Calu3 (cell line): ENCODE measurements at regions of chr6 and their contacts with region 1.

Region 1: DNA sequence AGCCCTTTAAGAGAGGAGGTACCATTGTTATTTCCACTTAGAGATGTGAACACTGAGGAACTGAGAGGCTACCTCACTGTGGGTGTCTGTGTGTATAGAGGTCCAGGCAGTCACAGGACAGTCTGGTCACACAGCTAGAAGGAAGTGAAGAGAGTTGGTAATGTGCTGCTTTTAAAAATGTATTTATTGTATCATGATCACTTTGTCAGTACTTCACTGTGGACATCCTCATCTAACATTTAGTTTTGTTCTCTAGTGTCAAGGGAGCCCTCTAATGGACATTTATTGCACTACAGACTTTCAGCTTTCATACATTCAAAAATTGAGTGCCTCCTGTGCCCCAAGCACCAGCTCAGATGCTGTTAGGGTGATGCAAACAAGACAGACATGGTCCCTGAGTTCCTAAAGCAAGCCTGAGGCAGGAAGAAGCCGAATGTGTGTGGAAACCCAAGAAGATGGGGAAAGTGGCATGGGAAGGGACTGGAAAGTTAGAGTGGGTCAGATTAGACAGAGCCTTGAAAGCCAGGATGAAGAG is 123.0 kb downstream of the SLC16A10 start:
- DNase-seq: peak; percentile 38
- H3K4me3 Mint-ChIP-seq: no peak overlapping the region
- H3K27ac Mint-ChIP-seq: no peak overlapping the region
- H3K4me1 Mint-ChIP-seq: no peaks in the 10 kb centered on the region
- H3K27me3 Mint-ChIP-seq: no peaks in the 10 kb centered on the region
- CTCF ChIP-seq: peak; percentile 53

Region 2: DNA sequence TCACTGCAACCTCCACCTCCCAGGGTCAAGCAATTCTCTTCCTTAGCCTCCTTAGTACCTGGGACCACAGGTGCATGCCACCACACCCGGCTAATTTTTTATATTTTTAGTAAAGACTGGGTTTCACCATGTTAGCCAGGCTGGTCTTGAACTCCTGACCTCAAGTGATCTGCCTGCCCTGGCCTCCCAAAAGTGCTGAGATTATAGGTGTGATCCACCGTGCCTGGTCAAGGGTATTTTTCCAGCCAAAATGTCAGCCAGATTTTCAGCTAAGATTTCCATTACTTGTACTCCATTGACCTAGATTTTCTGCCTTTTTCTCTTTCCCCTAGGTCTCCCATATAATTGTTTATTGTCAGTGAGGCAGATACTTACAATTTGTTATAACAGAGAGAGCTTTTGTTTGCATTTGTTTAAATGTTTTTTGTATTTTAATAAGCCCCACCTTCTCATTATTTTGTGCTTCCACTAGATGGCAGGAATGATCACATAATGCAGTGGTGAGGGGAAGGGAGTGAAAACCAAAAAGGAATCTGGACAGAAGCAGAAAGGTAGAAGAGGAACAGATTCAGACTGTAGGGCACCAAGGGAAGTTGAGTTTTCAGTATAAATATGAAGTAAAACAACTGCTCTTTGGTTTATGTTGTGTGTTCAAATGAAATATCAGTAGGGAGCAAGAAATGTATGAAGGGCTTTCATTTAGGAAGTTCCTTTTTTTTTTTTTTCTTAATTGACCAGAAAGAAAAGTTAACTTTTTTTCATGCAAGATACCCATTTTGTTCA is 198.7 kb before region 1 on chr6:
- CTCF ChIA-PET with region 1: interaction called, 14 read pairs
- intact Hi-C with region 1: loop called (anchors 2 kb)
- DNase-seq: peak; percentile 8
- H3K4me3 Mint-ChIP-seq: no peak overlapping the region
- H3K27ac Mint-ChIP-seq: no peak overlapping the region
- H3K4me1 Mint-ChIP-seq: peaks cover 9% of the 10 kb centered on the region
- H3K27me3 Mint-ChIP-seq: no peaks in the 10 kb centered on the region
- CTCF ChIP-seq: peak; percentile 50

Region 3: GRCh38 chr6:111030008-111031007 is 180.0 kb before region 1 on chr6:
- CTCF ChIA-PET with region 1: interaction called, 6 read pairs
- intact Hi-C with region 1: loop called (anchors 5 kb)
- DNase-seq: no peak
- H3K4me3 Mint-ChIP-seq: no peak overlapping the region
- H3K27ac Mint-ChIP-seq: no peak overlapping the region
- H3K4me1 Mint-ChIP-seq: peaks cover 24% of the 10 kb centered on the region
- H3K27me3 Mint-ChIP-seq: no peaks in the 10 kb centered on the region
- CTCF ChIP-seq: no peak

Region 4: DNA sequence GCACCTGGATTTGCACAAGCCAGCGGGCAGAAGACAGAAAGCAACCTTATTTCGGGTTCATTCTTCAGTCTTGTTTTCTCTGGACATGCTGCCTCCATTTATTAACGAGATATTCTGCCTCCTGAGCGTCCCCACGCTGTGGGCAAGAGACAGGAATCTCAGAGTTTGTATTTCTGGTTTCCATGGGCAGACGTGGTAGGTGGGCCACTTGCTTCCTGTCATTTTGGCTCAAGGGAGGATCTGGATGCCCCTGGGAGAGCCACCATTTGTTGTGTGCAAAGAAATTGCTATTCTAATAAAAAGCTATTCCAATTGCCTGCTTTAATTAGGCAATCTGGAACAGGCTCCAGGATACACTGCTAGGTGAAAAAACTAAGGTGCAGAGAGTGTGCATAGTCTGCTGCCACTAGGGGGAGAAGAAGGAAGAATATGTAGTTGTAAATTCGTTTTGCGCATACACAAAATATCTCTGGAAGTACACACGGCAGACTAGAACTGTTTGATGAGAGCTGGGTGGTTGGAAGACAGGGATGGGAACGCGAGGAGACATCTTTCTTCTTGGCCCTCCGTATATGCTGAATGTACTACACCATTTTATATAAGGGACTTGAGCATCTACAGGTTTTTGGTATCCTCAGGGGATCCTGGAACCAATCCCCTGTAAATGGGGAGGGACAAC is 153.0 kb before region 1 on chr6:
- CTCF ChIA-PET with region 1: interaction called, 17 read pairs
- intact Hi-C with region 1: loop called (anchors 1 kb)
- DNase-seq: peak; percentile 29
- H3K4me3 Mint-ChIP-seq: no peak overlapping the region
- H3K27ac Mint-ChIP-seq: no peak overlapping the region
- H3K4me1 Mint-ChIP-seq: no peaks in the 10 kb centered on the region
- H3K27me3 Mint-ChIP-seq: peaks cover 40% of the 10 kb centered on the region
- CTCF ChIP-seq: no peak

Region 5: DNA sequence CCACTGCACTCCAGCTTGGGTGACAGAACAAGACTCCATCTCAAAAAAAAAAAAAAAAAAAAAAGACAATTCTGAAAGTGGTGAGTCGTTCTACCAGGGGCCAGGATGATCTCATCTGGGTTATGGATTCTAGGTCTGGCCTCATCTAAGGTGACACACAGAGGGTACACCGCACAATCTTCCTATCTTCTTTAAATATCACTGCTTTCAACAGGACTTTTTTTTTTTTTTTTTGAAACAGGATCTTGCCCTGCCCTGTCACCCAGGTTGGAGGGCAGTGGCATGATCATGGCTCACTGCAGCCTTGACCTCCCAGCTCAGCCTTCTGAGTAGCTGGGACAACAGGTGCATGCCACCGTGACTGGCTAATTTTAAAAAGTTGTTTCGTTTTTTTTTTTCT is 55.3 kb before region 1 on chr6:
- CTCF ChIA-PET with region 1: no interaction called
- intact Hi-C with region 1: no loop called
- DNase-seq: no peak
- H3K4me3 Mint-ChIP-seq: no peak overlapping the region
- H3K27ac Mint-ChIP-seq: no peak overlapping the region
- H3K4me1 Mint-ChIP-seq: no peaks in the 10 kb centered on the region
- H3K27me3 Mint-ChIP-seq: no peaks in the 10 kb centered on the region
- CTCF ChIP-seq: no peak

Region 6: DNA sequence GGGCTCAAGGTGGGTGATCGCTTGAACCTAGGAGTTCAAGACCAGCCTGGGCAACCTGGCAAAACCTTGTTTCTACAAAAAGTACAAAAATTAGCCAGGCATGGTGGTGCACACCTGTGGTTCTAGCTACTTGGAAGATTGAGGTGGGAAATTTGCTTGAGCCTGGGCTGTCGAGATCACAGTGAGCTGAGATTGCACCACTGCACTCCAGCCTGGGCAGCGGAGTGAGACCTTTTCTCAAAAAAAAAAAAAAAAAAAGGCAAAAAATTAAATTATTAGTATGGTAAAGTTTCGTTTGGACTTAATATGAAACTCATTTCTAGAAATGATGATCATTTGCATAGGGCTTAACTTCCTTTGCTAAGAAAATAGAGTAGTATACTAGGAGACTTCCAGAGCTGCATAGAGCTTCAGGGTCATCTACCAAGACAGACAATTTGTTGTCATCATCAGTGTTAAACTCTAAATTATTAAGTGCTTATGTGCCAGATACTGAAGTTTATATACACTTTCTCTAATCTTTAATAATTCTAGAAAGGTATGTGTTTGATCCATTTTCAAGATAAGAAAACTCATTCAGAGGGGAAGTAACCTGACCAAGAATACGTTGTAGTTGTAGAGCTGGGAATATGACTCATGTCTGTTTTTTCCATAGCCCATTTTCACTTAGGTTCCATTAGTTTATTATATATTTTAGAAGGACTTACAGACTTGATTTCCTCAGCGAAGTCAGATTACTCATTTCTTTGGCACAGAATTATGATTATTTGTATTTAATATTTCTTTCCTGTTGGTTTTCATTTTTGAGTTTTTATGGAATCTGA is 38.5 kb before region 1 on chr6:
- CTCF ChIA-PET with region 1: no interaction called
- intact Hi-C with region 1: no loop called
- DNase-seq: no peak
- H3K4me3 Mint-ChIP-seq: no peak overlapping the region
- H3K27ac Mint-ChIP-seq: no peak overlapping the region
- H3K4me1 Mint-ChIP-seq: peaks cover 9% of the 10 kb centered on the region
- H3K27me3 Mint-ChIP-seq: no peaks in the 10 kb centered on the region
- CTCF ChIP-seq: no peak

Region 7: GRCh38 chr6:111242452-111242851 is 32.2 kb after region 1 on chr6:
- CTCF ChIA-PET with region 1: no interaction called
- intact Hi-C with region 1: no loop called
- DNase-seq: peak; percentile 5
- H3K4me3 Mint-ChIP-seq: no peak overlapping the region
- H3K27ac Mint-ChIP-seq: no peak overlapping the region
- H3K4me1 Mint-ChIP-seq: peaks cover 9% of the 10 kb centered on the region
- H3K27me3 Mint-ChIP-seq: no peaks in the 10 kb centered on the region
- CTCF ChIP-seq: no peak